Activated naive CD4-positive, alpha-beta T cell treated with anti-CD3 and anti-CD28 coated beads for 36 hours (primary cell): ENCODE measurements at regions of chr1 and their contacts with region 1.

Region 1: GRCh38 chr1:183498342-183498991 is 26.2 kb downstream of the SMG7 start:
- DNase-seq: peak; percentile 22
- H3K4me3 Mint-ChIP-seq: peak overlapping the region; percentile 2
- H3K27ac Mint-ChIP-seq: peak overlapping the region; percentile 75
- H3K4me1 Mint-ChIP-seq: peaks cover 62% of the 10 kb centered on the region
- H3K27me3 Mint-ChIP-seq: no peaks in the 10 kb centered on the region

Region 2: DNA sequence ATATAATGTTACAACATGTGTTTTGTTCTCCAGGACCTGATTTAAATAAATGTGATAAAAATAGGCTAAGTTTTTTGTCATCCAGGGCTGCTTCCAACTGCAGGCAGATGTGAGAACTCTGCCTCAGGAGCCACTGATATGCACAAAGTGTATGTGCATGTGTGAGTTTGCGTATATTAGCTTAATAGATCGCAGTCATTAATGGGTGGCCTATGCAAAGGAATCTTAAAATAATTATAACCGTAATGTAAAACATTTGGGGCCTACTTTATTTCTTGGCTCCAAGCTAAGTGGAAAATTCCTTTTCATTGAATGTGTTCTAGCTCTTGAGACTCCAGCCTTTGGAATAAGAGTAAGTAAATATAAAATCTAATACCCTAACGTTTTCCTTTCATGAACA is 642.6 kb before region 1 on chr1:
- CTCF ChIA-PET with region 1: no interaction called
- intact Hi-C with region 1: no loop called
- DNase-seq: no peak
- H3K4me3 Mint-ChIP-seq: no peak overlapping the region
- H3K27ac Mint-ChIP-seq: no peak overlapping the region
- H3K4me1 Mint-ChIP-seq: peaks cover 24% of the 10 kb centered on the region
- H3K27me3 Mint-ChIP-seq: no peaks in the 10 kb centered on the region

Region 3: DNA sequence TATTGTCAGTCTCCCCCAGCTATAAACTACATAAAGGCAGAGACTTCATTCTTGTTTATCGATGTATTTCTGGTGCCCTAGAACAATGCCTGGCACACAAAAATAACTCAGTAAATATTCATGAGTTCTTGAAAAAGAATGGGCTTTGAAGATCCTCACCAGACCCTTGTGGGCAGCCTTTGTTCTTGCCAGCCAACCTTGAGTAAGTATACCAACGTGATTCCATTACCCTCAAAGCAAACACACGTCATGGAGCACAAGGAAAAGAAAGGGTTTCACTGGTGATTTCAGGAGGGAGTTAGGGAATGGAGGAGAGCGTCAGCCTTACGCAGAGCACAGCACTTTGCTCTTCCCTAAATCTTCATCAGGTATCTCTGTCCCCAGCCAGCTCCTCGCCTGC is 109.7 kb before region 1 on chr1:
- CTCF ChIA-PET with region 1: no interaction called
- intact Hi-C with region 1: no loop called
- DNase-seq: no peak
- H3K4me3 Mint-ChIP-seq: no peak overlapping the region
- H3K27ac Mint-ChIP-seq: no peak overlapping the region
- H3K4me1 Mint-ChIP-seq: no peaks in the 10 kb centered on the region
- H3K27me3 Mint-ChIP-seq: peaks cover 4% of the 10 kb centered on the region

Region 4: GRCh38 chr1:183454390-183454789 is 44.1 kb before region 1 on chr1:
- CTCF ChIA-PET with region 1: no interaction called
- intact Hi-C with region 1: no loop called
- DNase-seq: no peak
- H3K4me3 Mint-ChIP-seq: no peak overlapping the region
- H3K27ac Mint-ChIP-seq: no peak overlapping the region
- H3K4me1 Mint-ChIP-seq: no peaks in the 10 kb centered on the region
- H3K27me3 Mint-ChIP-seq: peaks cover 16% of the 10 kb centered on the region

Region 5: GRCh38 chr1:183480971-183481441 is 17.5 kb before region 1 on chr1:
- CTCF ChIA-PET with region 1: no interaction called
- intact Hi-C with region 1: loop called (anchors 1 kb)
- DNase-seq: no peak
- H3K4me3 Mint-ChIP-seq: no peak overlapping the region
- H3K27ac Mint-ChIP-seq: no peak overlapping the region
- H3K4me1 Mint-ChIP-seq: peaks cover 62% of the 10 kb centered on the region
- H3K27me3 Mint-ChIP-seq: no peaks in the 10 kb centered on the region